ENCODE measurements at regions of chr3 and their contacts with region 1.

Region 1: GRCh38 chr3:187186801-187187421 is 10.4 kb upstream of the RTP1 start:
- DNase-seq: peak; percentile 86
- H3K4me3 Mint-ChIP-seq: peak overlapping the region; percentile 9
- H3K27ac Mint-ChIP-seq: peak overlapping the region; percentile 76
- H3K4me1 Mint-ChIP-seq: peaks cover 51% of the 10 kb centered on the region
- H3K27me3 Mint-ChIP-seq: no peaks in the 10 kb centered on the region
- CTCF ChIP-seq: no peak

Region 2: GRCh38 chr3:187145149-187145895 is 41.6 kb before region 1 on chr3:
- CTCF ChIA-PET with region 1: no interaction called
- intact Hi-C with region 1: no loop called
- DNase-seq: no peak
- H3K4me3 Mint-ChIP-seq: no peak overlapping the region
- H3K27ac Mint-ChIP-seq: no peak overlapping the region
- H3K4me1 Mint-ChIP-seq: no peaks in the 10 kb centered on the region
- H3K27me3 Mint-ChIP-seq: no peaks in the 10 kb centered on the region
- CTCF ChIP-seq: no peak

Region 3: GRCh38 chr3:187210545-187211327 is 23.8 kb after region 1 on chr3:
- CTCF ChIA-PET with region 1: interaction called, 9 read pairs
- intact Hi-C with region 1: loop called (anchors 1 kb)
- DNase-seq: no peak
- H3K4me3 Mint-ChIP-seq: no peak overlapping the region
- H3K27ac Mint-ChIP-seq: no peak overlapping the region
- H3K4me1 Mint-ChIP-seq: peaks cover 40% of the 10 kb centered on the region
- H3K27me3 Mint-ChIP-seq: peaks cover 3% of the 10 kb centered on the region
- CTCF ChIP-seq: no peak

Measured in Calu3 (cell line).